HCT116 (cell line): ENCODE measurements at regions of chr9 and their contacts with region 1.

Region 1: GRCh38 chr9:36023260-36024048 is 13.3 kb upstream of the RECK start:
- DNase-seq: peak; percentile 59
- ATAC-seq: peak; percentile 97
- H3K4me3 ChIP-seq: no peak overlapping the region
- H3K27ac ChIP-seq: no peak overlapping the region
- H3K4me1 ChIP-seq: no peaks in the 10 kb centered on the region
- H3K27me3 ChIP-seq: no peaks in the 10 kb centered on the region
- CTCF ChIP-seq: peak; percentile 88 to 94 (median 89)
- POLR2A ChIP-seq: no peak
- RAD21 ChIP-seq: peak; percentile 86

Region 2: DNA sequence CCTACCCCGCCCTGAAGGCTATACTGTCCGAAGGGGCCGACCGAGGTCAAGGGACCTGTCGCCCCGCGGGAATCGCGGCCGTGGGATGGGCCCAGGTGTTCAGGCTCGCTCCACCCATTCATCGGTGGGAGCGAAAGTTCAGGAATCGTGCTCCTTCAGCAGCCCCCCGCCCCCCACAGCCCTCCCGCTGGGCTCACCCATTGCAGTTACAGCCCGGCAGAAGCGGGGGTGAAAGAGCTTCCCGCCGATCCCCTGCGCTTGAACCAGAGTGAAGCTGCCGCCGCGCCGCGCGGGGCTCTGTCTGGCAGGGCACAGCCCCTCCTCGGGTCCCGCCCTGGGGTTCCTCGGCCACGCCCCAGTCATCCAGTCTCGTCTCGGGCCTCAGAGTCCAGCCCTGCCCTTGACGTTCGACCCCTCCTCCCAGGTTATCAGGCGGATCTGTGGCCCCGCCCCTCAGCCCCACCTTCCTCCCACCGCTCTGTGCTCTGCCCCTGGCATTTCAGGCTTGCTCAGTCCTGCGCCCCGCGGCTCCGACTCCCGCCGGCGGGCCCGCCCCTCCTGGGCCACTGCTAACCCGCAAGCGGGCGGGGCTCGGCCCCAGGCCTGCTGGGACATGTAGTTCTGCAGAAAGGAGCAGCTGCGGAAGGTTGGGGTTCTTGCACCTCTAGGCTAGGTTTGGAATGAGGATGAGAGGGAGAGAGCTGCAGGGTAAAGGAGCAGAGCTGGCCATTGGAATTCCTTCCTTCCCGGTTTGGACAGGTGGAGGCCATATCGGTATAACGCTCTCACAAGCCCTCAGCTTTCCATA is 1646.7 kb before region 1 on chr9 and contains the start of gene MYORG:
- CTCF ChIA-PET with region 1: no interaction called
- POLR2A ChIA-PET with region 1: no interaction called
- RAD21 ChIA-PET with region 1: no interaction called
- intact Hi-C with region 1: no loop called
- DNase-seq: peak; percentile 94
- ATAC-seq: peak; percentile 84
- H3K4me3 ChIP-seq: peak within 1 kb of the TSS; percentile 72 to 84
- H3K27ac ChIP-seq: peak within 1 kb of the TSS; percentile 46
- H3K4me1 ChIP-seq: peaks cover 31 to 50% of the 10 kb centered on the region in 2 experiments
- H3K27me3 ChIP-seq: no peaks in the 10 kb centered on the region
- CTCF ChIP-seq: no peak
- POLR2A ChIP-seq: peak; percentile 29
- RAD21 ChIP-seq: no peak
- total RNA-seq, gene MYORG: 8.5 TPM

Region 3: GRCh38 chr9:35790385-35791296 is 232.8 kb before region 1 on chr9:
- CTCF ChIA-PET with region 1: interaction called, 7 read pairs
- POLR2A ChIA-PET with region 1: no interaction called
- RAD21 ChIA-PET with region 1: no interaction called
- intact Hi-C with region 1: loop called (anchors 1 kb)
- DNase-seq: no peak
- ATAC-seq: peak; percentile 96
- H3K4me3 ChIP-seq: no peak overlapping the region
- H3K27ac ChIP-seq: no peak overlapping the region
- H3K4me1 ChIP-seq: peaks cover 0 to 7% of the 10 kb centered on the region in 2 experiments; a peak in 1 of 4 replicates
- H3K27me3 ChIP-seq: no peaks in the 10 kb centered on the region
- CTCF ChIP-seq: peak; percentile 81 to 87 (median 86)
- POLR2A ChIP-seq: no peak
- RAD21 ChIP-seq: peak; percentile 89

Region 4: GRCh38 chr9:35903049-35903448 is 120.4 kb before region 1 on chr9:
- CTCF ChIA-PET with region 1: interaction called, 17 read pairs
- POLR2A ChIA-PET with region 1: no interaction called
- RAD21 ChIA-PET with region 1: interaction called in 1 of 2 experiments, 5 read pairs
- intact Hi-C with region 1: no loop called
- DNase-seq: peak; percentile 48
- ATAC-seq: peak; percentile 35; the same call in 1 of the 2 replicates
- H3K4me3 ChIP-seq: no peak overlapping the region
- H3K27ac ChIP-seq: no peak overlapping the region
- H3K4me1 ChIP-seq: peaks cover 32 to 44% of the 10 kb centered on the region in 2 experiments
- H3K27me3 ChIP-seq: no peaks in the 10 kb centered on the region
- CTCF ChIP-seq: peak in 2 of 3 experiments; percentile 51 to 78; a peak in 4 of 6 replicates
- POLR2A ChIP-seq: no peak
- RAD21 ChIP-seq: no peak

Region 5: DNA sequence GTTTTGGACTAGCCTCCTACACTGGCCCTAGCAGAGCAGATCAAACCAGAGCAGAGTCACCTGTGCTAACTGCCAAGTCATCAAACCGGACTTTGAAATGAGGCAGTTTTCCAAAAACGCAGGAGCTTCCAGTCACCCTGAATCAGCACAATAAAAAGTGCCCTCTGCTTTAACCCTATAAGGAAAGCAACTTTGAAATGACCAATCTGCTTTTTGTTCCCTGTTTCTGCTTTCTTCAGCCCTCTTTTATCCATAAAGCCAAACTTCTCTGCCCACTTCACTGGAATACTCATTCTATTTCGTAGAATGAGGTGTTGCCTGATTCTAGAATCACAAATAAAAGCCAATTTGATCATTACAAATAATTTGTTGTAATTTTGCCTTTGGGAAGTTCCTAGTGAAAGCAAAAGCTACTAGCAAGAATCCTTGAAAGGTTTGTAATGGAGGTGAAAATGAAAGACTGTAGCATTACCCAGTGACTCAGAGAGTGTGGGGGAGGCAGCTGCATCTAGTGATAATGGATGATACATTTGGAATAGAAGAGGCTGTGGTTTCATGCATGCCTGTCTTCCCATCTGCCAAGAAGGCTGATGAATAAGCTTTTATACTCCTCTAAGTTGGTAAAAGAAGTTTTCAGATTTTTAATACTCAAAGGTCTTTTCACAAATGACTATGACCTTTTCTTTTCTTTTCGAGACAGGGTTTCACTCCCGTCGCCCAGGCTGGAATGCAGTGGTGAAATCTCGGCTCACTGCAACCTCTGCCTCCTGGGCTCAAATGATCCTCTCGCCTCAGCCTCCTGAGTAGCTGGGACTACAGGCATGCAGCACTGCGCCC is 99.3 kb before region 1 on chr9:
- CTCF ChIA-PET with region 1: no interaction called
- POLR2A ChIA-PET with region 1: no interaction called
- RAD21 ChIA-PET with region 1: no interaction called
- intact Hi-C with region 1: no loop called
- DNase-seq: peak; percentile 44
- ATAC-seq: peak; percentile 88
- H3K4me3 ChIP-seq: peak overlapping the region in 1 of 2 experiments; percentile 31; a peak in 2 of 4 replicates
- H3K27ac ChIP-seq: peak overlapping the region; percentile 46; the same call in 1 of the 2 replicates
- H3K4me1 ChIP-seq: peaks cover 14 to 20% of the 10 kb centered on the region in 2 experiments
- H3K27me3 ChIP-seq: no peaks in the 10 kb centered on the region
- CTCF ChIP-seq: no peak
- POLR2A ChIP-seq: no peak
- RAD21 ChIP-seq: no peak

Region 6: GRCh38 chr9:35954942-35955546 is 68.4 kb before region 1 on chr9:
- CTCF ChIA-PET with region 1: interaction called, 46 read pairs
- POLR2A ChIA-PET with region 1: no interaction called
- RAD21 ChIA-PET with region 1: interaction called in 1 of 2 experiments, 4 read pairs
- intact Hi-C with region 1: loop called (anchors 1 kb)
- DNase-seq: peak; percentile 67
- ATAC-seq: peak; percentile 95
- H3K4me3 ChIP-seq: peak overlapping the region in 1 of 2 experiments; percentile 26; a peak in 1 of 4 replicates
- H3K27ac ChIP-seq: no peak overlapping the region
- H3K4me1 ChIP-seq: peaks cover 0 to 8% of the 10 kb centered on the region in 2 experiments; a peak in 3 of 4 replicates
- H3K27me3 ChIP-seq: no peaks in the 10 kb centered on the region
- CTCF ChIP-seq: peak; percentile 86 to 89 (median 88)
- POLR2A ChIP-seq: no peak
- RAD21 ChIP-seq: peak; percentile 83

Region 7: GRCh38 chr9:36036780-36037548 is 13.5 kb after region 1 on chr9 and contains the start of gene RECK:
- CTCF ChIA-PET with region 1: interaction called, 13 read pairs
- POLR2A ChIA-PET with region 1: no interaction called
- RAD21 ChIA-PET with region 1: no interaction called
- intact Hi-C with region 1: no loop called
- DNase-seq: peak; percentile 37
- ATAC-seq: peak; percentile 97
- H3K4me3 ChIP-seq: peak within 1 kb of the TSS; percentile 72 to 85
- H3K27ac ChIP-seq: peak within 1 kb of the TSS; percentile 60
- H3K4me1 ChIP-seq: peaks cover 0 to 13% of the 10 kb centered on the region in 2 experiments; a peak in 2 of 4 replicates
- H3K27me3 ChIP-seq: no peaks in the 10 kb centered on the region
- CTCF ChIP-seq: no peak
- POLR2A ChIP-seq: no peak
- RAD21 ChIP-seq: no peak
- total RNA-seq, gene RECK: 3.8 TPM

Region 8: GRCh38 chr9:36177571-36177970 is 154.1 kb after region 1 on chr9:
- CTCF ChIA-PET with region 1: no interaction called
- POLR2A ChIA-PET with region 1: no interaction called
- RAD21 ChIA-PET with region 1: no interaction called
- intact Hi-C with region 1: no loop called
- DNase-seq: no peak
- ATAC-seq: no peak
- H3K4me3 ChIP-seq: no peak overlapping the region
- H3K27ac ChIP-seq: no peak overlapping the region
- H3K4me1 ChIP-seq: no peaks in the 10 kb centered on the region
- H3K27me3 ChIP-seq: no peaks in the 10 kb centered on the region
- CTCF ChIP-seq: no peak
- POLR2A ChIP-seq: no peak
- RAD21 ChIP-seq: no peak